IMR-90 (cell line): ENCODE measurements at regions of chr15 and their contacts with region 1.

Region 1: DNA sequence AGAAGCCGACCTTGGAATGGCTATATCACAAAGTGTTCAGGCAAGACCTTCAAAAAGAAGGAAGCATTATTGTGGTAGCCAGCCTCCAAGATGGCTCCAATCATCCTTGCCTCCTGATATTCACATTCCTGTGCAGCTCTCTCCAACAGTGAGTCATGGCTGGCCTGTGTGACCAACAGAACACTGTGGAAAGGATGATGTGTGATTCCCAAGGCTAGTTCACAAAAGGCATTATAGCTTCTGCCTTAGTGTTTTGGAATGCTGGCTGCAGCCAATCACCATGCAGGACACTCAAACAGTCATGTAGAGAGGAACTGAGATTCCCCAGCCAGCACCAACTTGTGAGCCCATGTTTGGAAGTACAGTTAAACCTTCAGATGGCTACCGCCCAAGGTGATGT is 102.6 kb downstream of the EFL1 start:
- DNase-seq: peak; percentile 100
- ATAC-seq: peak; percentile 99
- H3K4me3 ChIP-seq: no peak overlapping the region
- H3K27ac ChIP-seq: peak overlapping the region; percentile 51; the same call in 1 of the 2 replicates
- H3K4me1 ChIP-seq: no peaks in the 10 kb centered on the region; the same call in 1 of the 2 replicates
- H3K27me3 ChIP-seq: no peaks in the 10 kb centered on the region
- CTCF ChIP-seq: no peak
- POLR2A ChIP-seq: no peak
- RAD21 ChIP-seq: 0 out of 2 replicates have a peak, but pooled peaks have one; percentile 7

Region 2: DNA sequence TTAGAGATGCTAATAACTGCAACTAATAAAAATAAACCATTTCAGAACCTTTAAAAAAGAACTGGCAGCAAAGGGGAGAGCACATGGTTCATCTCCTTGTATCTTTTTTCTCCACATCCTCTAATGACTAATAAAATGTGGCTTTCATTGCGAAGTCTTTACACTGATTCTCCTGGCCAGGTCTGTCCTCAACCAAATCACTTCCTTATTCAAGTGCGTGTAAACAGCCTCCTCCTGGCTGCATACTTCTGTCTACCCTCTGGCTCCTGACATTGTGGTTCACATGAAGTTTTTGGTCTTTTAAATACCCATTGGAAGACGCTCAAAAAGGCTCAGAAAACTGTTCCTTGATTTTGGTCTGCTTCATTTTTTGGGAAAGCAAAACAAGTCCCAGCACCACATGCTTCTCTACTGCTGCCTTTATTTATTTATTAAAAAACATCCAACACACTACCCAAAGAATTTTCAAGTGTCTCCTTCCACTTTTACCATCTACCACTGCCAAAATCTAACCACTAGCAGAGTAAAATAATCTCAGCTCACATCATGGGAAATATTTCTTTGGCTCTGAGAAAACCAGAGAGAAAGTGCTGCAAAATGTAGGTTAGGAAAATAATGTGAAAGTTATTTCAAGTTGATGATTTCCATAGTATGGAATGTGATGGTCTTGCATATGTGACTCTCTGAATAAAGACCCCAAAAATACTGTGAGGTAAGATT is 17.5 kb after region 1 on chr15:
- CTCF ChIA-PET with region 1: no interaction called
- POLR2A ChIA-PET with region 1: no interaction called
- dilution Hi-C with region 1: no loop called
- in situ Hi-C with region 1: no loop called
- intact Hi-C with region 1: loop called (anchors 2 kb)
- DNase-seq: peak; percentile 62
- ATAC-seq: peak; percentile 56
- H3K4me3 ChIP-seq: no peak overlapping the region
- H3K27ac ChIP-seq: no peak overlapping the region
- H3K4me1 ChIP-seq: peaks cover 7% of the 10 kb centered on the region
- H3K27me3 ChIP-seq: no peaks in the 10 kb centered on the region
- CTCF ChIP-seq: no peak
- POLR2A ChIP-seq: no peak
- RAD21 ChIP-seq: no peak